GM12878 (cell line): ENCODE measurements at regions of chr10 and their contacts with region 1.

Region 1: GRCh38 chr10:72223743-72224101 is 7.6 kb upstream of the ASCC1 start:
- DNase-seq: no peak
- ATAC-seq: peak; percentile 71
- H3K4me3 ChIP-seq: no peak overlapping the region
- H3K27ac ChIP-seq: peak overlapping the region; percentile 47
- H3K4me1 ChIP-seq: peaks cover 29% of the 10 kb centered on the region
- H3K27me3 ChIP-seq: no peaks in the 10 kb centered on the region
- CTCF ChIP-seq: no peak
- EP300 ChIP-seq: no peak
- POLR2A ChIP-seq: no peak
- RAD21 ChIP-seq: no peak

Region 2: DNA sequence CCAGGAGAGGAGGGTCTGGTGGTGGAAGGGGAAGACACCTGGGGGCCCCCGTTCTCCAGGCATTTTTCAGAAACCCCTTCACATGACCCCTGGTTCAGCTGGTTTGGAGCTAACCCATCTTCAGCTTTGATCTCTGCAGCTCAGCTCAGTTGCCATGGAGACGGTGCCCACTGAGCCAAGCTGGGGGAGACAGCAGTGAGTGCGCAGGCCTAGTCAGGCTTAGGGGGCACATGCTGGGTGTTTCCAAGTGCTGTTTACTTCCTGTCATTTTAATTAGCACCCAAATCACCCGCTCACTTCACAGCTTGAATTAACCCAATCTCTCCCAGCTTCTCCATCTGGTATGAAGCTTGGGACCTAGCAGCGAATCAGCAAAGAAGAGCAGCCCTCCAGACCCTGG is 144.4 kb before region 1 on chr10:
- CTCF ChIA-PET with region 1: interaction called, 3 read pairs
- POLR2A ChIA-PET with region 1: no interaction called
- RAD21 ChIA-PET with region 1: interaction called, 3 read pairs
- SMC1A ChIA-PET with region 1: interaction called, 11 read pairs
- in situ Hi-C with region 1: no loop called
- intact Hi-C with region 1: no loop called
- DNase-seq: no peak
- ATAC-seq: peak; percentile 40
- H3K4me3 ChIP-seq: no peak overlapping the region
- H3K27ac ChIP-seq: no peak overlapping the region
- H3K4me1 ChIP-seq: peaks cover 21% of the 10 kb centered on the region
- H3K27me3 ChIP-seq: no peaks in the 10 kb centered on the region
- CTCF ChIP-seq: no peak
- EP300 ChIP-seq: no peak
- POLR2A ChIP-seq: no peak
- RAD21 ChIP-seq: no peak

Region 3: GRCh38 chr10:72140174-72140573 is 83.5 kb before region 1 on chr10:
- CTCF ChIA-PET with region 1: interaction called, 127 read pairs
- POLR2A ChIA-PET with region 1: interaction called, 3 read pairs
- RAD21 ChIA-PET with region 1: interaction called, 89 read pairs
- SMC1A ChIA-PET with region 1: interaction called, 7 read pairs
- in situ Hi-C with region 1: no loop called
- intact Hi-C with region 1: no loop called
- DNase-seq: no peak
- ATAC-seq: no peak
- H3K4me3 ChIP-seq: no peak overlapping the region
- H3K27ac ChIP-seq: no peak overlapping the region
- H3K4me1 ChIP-seq: peaks cover 10% of the 10 kb centered on the region
- H3K27me3 ChIP-seq: no peaks in the 10 kb centered on the region
- CTCF ChIP-seq: no peak
- EP300 ChIP-seq: no peak
- POLR2A ChIP-seq: no peak
- RAD21 ChIP-seq: no peak

Region 4: GRCh38 chr10:72238392-72239175 is 14.9 kb after region 1 on chr10:
- CTCF ChIA-PET with region 1: interaction called, 10 read pairs
- POLR2A ChIA-PET with region 1: interaction called, 12 read pairs
- RAD21 ChIA-PET with region 1: interaction called, 3 read pairs
- SMC1A ChIA-PET with region 1: interaction called, 74 read pairs
- in situ Hi-C with region 1: no loop called
- intact Hi-C with region 1: no loop called
- DNase-seq: no peak
- ATAC-seq: no peak
- H3K4me3 ChIP-seq: no peak overlapping the region
- H3K27ac ChIP-seq: no peak overlapping the region
- H3K4me1 ChIP-seq: peaks cover 19% of the 10 kb centered on the region
- H3K27me3 ChIP-seq: no peaks in the 10 kb centered on the region
- CTCF ChIP-seq: no peak
- EP300 ChIP-seq: no peak
- POLR2A ChIP-seq: no peak
- RAD21 ChIP-seq: no peak

Region 5: GRCh38 chr10:72260588-72261322 is 37.0 kb after region 1 on chr10:
- CTCF ChIA-PET with region 1: interaction called, 8 read pairs
- POLR2A ChIA-PET with region 1: interaction called, 82 read pairs
- RAD21 ChIA-PET with region 1: interaction called, 129 read pairs
- SMC1A ChIA-PET with region 1: interaction called, 29 read pairs
- in situ Hi-C with region 1: no loop called
- intact Hi-C with region 1: loop called (anchors 5 kb)
- DNase-seq: peak; percentile 88
- ATAC-seq: peak; percentile 80
- H3K4me3 ChIP-seq: peak overlapping the region; percentile 68
- H3K27ac ChIP-seq: peak overlapping the region; percentile 95
- H3K4me1 ChIP-seq: peaks cover 68% of the 10 kb centered on the region
- H3K27me3 ChIP-seq: no peaks in the 10 kb centered on the region
- CTCF ChIP-seq: peak in 2 of 3 experiments; percentile 15 to 39; a peak in 2 of 6 replicates
- EP300 ChIP-seq: no peak; a peak in 2 of 4 replicates
- POLR2A ChIP-seq: peak; percentile 77
- RAD21 ChIP-seq: peak; percentile 9; the same call in 1 of the 2 replicates

Region 6: DNA sequence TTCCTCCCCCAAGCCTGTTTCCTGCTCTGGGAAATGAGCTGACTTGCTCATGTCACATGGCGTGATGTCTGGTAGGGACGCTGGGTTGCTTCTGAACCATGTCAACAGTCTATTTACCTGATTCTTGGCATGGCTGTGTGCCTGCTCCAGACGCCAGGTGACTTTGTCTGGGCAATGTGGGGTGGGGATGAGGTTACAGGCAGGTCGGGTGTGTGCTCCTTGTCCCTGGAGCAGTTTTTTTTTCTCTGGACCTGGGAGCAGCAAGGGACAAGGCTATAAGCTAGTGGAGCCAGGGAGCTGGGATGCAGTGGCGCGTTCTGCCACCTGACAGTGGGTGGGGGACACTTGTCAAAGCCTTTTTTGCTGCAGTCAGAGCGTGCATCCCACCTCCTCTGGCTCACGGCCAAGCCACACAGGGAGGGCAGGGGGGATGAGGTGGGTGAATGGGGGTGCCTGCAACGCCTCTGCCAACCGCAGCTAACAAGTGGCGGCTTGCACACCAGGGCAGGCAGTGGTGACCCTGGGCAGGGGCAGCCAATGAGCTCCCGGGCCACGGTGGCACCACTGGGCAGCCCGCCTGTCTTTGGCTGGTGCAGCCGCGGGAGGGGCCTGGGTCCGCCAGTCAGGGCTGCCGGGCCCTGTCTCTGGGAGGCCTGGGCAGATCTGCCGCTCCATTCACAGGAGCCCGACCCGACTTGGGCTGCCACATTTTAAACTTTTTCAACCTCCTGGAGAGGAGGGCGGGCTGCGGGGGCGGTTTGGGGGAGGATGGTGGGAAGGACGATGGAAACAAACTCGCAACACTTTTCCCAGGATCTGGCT is 108.1 kb after region 1 on chr10:
- CTCF ChIA-PET with region 1: interaction called, 32 read pairs
- POLR2A ChIA-PET with region 1: interaction called, 10 read pairs
- RAD21 ChIA-PET with region 1: interaction called, 19 read pairs
- SMC1A ChIA-PET with region 1: interaction called, 24 read pairs
- in situ Hi-C with region 1: loop called (anchors 5 kb)
- intact Hi-C with region 1: loop called (anchors 2 kb)
- DNase-seq: peak; percentile 96
- ATAC-seq: peak; percentile 80
- H3K4me3 ChIP-seq: 0 out of 2 replicates have a peak overlapping the region, but pooled peaks have one; percentile 4
- H3K27ac ChIP-seq: peak overlapping the region; percentile 95
- H3K4me1 ChIP-seq: peaks cover 76% of the 10 kb centered on the region
- H3K27me3 ChIP-seq: no peaks in the 10 kb centered on the region
- CTCF ChIP-seq: peak; percentile 1 to 50 (median 13); a peak in 1 of 6 replicates
- EP300 ChIP-seq: peak; percentile 31 to 85; a peak in 3 of 4 replicates
- POLR2A ChIP-seq: peak; percentile 68
- RAD21 ChIP-seq: no peak